Psoas muscle (tissue), 8 donors: ENCODE measurements at regions of chr2 and their contacts with region 1.

Region 1: DNA sequence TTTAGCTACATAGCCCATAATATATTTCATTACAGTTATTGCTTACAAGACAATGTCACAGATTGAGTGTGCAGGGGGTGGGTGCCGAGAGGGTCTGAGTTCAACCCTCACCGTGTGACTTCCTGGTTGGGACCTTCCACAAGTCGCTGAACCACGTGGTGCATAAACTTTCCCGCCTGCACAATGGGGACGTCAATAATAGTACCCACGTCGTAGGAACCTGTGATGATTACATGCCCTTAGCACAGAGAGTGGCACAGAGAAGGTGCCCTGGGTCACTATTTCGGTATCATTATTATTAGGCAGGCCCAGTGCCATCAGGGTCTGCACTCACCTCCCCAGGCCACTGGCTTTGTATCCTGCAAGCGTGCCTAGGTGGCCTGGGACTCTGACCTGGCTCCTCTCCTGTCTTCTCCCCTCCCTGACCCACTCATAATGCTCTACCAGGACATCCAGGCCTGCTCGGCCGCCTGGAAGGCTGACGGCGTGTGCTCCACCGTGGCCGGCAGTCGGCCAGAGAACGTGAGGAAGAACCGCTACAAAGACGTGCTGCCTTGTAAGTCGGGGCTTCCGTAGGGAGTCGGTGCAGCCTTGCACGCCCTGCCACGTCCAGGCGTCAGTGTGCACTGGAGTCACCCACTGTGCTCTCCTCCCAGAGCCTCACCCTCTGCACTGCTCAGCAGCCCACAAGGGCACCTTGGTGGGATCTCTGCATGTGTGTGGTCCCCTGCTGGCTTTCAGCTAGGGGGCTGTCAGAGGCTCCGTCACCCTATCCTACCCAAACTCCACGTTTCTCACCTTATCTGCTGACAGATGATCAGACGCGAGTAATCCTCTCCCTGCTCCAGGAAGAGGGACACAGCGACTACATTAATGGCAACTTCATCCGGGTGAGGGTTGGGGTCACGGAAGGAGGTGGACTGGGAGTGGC is 2.8 kb downstream of the PTPN18 start:
- DNase-seq: no peak
- ATAC-seq: no peak
- H3K4me3 ChIP-seq: no peak overlapping the region
- H3K27ac ChIP-seq: no peak overlapping the region
- H3K4me1 ChIP-seq: peaks cover 11% of the 10 kb centered on the region
- H3K27me3 ChIP-seq: no peaks in the 10 kb centered on the region
- CTCF ChIP-seq: no peak

Region 2: DNA sequence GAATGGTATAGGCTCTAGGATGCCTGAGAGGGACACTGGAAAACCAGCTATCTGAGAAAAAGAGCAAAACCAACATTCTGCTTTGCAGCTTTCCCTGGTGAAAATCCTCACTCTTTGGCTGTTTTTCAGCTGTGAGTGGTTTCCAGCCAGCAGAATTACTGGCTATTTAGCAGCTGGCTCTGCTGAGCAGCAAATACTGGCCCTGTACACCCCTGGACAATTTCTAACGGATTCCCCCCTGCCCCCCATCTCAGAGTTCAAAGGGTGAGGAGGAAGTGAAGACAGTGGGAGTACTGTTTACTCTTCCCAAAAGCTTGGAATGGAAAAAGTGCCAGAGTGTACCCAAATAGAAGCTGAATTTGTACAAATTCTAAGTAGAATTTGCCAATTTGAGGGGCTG is 42.1 kb before region 1 on chr2:
- intact Hi-C with region 1: no loop called
- DNase-seq: no peak
- ATAC-seq: no peak
- H3K4me3 ChIP-seq: no peak overlapping the region
- H3K27ac ChIP-seq: no peak overlapping the region
- H3K4me1 ChIP-seq: no peaks in the 10 kb centered on the region
- H3K27me3 ChIP-seq: no peaks in the 10 kb centered on the region
- CTCF ChIP-seq: no peak

Region 3: DNA sequence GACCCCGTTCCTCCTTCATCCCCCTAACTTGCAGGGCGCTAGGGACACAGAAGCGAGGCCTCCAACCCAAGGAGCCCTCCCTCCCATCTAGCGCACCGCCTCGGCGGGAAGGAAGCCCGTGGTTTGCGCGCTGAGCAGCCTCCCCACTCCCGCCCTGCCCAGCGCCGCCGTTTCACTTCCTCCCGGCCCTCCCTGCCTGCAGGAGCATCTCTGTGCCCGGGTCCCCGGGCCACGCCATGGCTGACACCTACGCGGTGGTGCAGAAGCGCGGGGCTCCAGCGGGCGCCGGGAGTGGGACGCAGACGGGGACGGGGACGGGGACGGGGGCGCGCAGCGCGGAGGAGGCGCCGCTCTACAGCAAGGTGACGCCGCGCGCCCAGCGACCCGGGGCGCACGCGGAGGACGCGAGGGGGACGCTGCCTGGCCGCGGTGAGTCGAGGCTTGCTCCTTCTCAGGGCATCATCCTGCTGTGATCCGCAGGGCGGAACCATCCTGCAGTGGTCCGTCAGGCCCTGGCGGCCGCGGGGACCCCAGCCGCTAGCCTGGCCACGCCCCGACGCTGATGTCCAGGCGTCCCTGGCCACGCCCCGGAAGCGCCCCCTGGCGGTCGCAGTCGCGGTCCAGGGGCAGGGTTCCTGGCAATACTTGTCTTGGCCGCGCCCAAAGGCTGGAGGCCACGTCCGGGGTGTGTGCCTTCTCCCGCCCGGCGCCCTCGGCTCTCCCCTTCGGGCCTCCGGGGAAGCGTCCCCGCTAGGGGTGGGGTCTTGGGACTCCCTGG is 13.6 kb after region 1 on chr2:
- intact Hi-C with region 1: loop called in 1 of 2 experiments (anchors 1 kb)
- DNase-seq: peak; percentile 92 to 94
- ATAC-seq: peak; percentile 88 to 97 (median 94)
- H3K4me3 ChIP-seq: peak overlapping the region; percentile 87
- H3K27ac ChIP-seq: peak overlapping the region; percentile 63
- H3K4me1 ChIP-seq: no peaks in the 10 kb centered on the region
- H3K27me3 ChIP-seq: no peaks in the 10 kb centered on the region
- CTCF ChIP-seq: peak; percentile 76